Right ventricle myocardium inferior (tissue), 1 donor: ENCODE measurements at regions of chr12 and their contacts with region 1.

Region 1: GRCh38 chr12:26097046-26097878 is 27.6 kb downstream of the BHLHE41 start:
- DNase-seq: peak; percentile 74
- ATAC-seq: peak; percentile 94

Region 2: DNA sequence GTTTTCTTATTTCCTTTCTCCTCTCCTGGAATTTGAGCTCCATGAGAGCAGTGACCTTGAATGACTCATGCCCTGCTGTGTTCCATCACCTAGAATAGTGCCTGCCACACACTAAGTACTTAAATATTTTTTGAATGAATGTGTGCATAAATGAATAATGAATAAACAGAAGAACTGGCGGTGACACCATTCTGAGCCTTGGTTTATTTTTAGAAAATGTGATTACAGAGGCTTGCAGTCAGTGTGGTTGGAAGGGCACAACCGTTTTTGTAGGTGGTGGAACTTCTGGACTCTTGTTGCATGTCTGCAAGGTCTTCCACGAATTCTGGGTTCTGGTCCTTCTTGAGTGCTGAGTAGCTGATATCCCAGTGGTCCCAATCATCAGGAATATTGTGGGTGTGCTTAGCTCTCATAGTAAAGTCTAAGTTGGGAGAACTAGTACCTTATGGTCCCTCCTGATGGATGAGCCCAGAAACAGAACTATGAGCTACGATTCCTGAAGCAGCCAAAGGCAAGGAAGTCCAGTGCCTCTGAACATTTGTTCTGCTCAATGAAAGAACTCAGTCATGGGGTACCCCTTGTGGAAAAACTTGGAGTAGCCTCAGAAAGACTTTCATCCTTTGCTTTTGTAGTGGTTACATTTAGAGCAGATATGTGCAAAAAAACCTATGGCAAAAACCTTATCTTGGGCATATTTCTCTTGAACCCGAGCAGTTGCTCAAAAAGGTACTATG is 56.3 kb after region 1 on chr12:
- intact Hi-C with region 1: no loop called
- DNase-seq: no peak
- ATAC-seq: peak; percentile 78

Region 3: DNA sequence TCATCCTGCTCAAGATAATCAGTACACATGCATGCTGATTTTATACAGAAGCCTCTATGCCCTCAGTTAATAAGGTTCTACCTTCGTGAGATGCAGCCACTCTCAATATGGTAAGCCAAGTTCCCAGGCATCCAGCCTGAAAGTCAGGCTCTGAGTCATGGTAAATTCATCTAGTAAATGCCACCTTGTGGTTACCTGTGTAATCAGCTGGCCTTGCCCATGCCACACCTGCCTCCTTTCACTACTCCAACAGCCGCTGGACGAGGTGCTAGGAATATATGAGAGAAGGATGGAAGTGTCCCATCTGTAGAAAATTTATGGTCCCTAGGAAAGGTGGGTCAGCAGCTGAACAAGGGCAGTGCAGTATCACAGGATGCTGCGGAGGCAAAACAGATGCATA is 305.4 kb after region 1 on chr12:
- intact Hi-C with region 1: loop called (anchors 10 kb)
- DNase-seq: no peak
- ATAC-seq: no peak

Region 4: GRCh38 chr12:26614020-26614616 is 516.9 kb after region 1 on chr12:
- intact Hi-C with region 1: loop called (anchors 5 kb)
- DNase-seq: no peak
- ATAC-seq: no peak